HCT116 (cell line): ENCODE measurements at regions of chr3 and their contacts with region 1.

Region 1: DNA sequence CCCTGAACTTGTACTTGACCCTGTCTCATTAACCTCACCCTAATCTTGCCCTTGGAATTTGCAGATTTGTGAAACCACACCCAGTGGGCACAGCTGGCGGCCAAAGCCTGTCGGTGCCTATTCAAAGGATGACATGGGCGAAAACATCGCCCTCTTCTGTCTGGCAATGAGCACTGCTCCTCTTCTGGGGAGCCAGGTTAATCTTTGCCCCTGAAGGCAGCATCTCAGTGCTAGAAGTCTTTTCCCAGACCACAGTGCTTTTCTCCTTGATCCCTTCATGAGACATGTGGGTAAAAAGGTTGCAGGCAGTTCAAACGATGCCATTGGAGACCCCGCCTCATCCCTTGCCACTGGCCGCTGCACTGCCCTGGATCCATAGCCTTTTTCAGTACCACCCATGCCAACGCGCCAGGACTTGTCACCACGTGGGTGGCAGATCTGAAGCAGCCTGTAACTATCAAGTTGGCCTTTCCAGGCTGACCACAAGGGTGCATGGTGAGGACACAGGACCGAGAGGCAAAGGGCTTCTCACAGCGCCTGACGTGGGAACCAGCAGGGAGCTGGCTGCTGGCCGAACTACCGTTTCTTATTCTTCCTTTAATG is 6.5 kb upstream of the DNASE1L3 start:
- DNase-seq: peak; percentile 90
- ATAC-seq: peak; percentile 97
- H3K4me3 ChIP-seq: peak overlapping the region in 1 of 2 experiments; percentile 46; a peak in 3 of 4 replicates
- H3K27ac ChIP-seq: peak overlapping the region; percentile 49
- H3K4me1 ChIP-seq: peaks cover 18 to 38% of the 10 kb centered on the region in 2 experiments
- H3K27me3 ChIP-seq: no peaks in the 10 kb centered on the region
- CTCF ChIP-seq: peak; percentile 81 to 90 (median 83)
- POLR2A ChIP-seq: no peak
- RAD21 ChIP-seq: peak; percentile 55

Region 2: DNA sequence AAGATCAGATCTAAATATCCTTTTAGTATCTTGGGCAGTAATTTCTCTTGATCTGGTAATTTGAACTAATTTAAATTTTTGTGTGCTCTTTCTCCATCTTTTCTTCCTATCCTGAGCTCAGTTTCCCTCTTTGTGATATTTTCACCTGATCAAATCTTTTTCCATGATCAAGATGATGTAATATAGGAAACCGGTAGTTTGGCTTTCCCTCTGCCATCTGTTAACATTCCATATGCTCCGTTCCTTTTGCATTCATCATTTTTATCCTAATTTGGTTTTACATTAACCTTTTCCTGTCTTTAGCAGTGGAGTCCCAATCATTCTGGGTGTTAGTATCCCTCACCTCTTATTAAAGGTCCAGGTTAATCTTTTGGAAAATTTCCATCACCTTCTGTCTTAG is 14.4 kb after region 1 on chr3:
- CTCF ChIA-PET with region 1: interaction called, 28 read pairs
- POLR2A ChIA-PET with region 1: no interaction called
- RAD21 ChIA-PET with region 1: no interaction called
- intact Hi-C with region 1: no loop called
- DNase-seq: no peak
- ATAC-seq: no peak
- H3K4me3 ChIP-seq: no peak overlapping the region
- H3K27ac ChIP-seq: no peak overlapping the region
- H3K4me1 ChIP-seq: peaks cover 3 to 7% of the 10 kb centered on the region in 2 experiments
- H3K27me3 ChIP-seq: 0 out of 2 replicates have a peak, but pooled peaks cover 7% of the 10 kb centered on the region
- CTCF ChIP-seq: no peak
- POLR2A ChIP-seq: no peak
- RAD21 ChIP-seq: no peak

Region 3: GRCh38 chr3:58299839-58300516 is 82.7 kb after region 1 on chr3:
- CTCF ChIA-PET with region 1: interaction called, 14 read pairs
- POLR2A ChIA-PET with region 1: no interaction called
- RAD21 ChIA-PET with region 1: interaction called in 1 of 2 experiments, 3 read pairs
- intact Hi-C with region 1: no loop called
- DNase-seq: no peak
- ATAC-seq: peak; percentile 79
- H3K4me3 ChIP-seq: no peak overlapping the region
- H3K27ac ChIP-seq: no peak overlapping the region
- H3K4me1 ChIP-seq: no peaks in the 10 kb centered on the region
- H3K27me3 ChIP-seq: no peaks in the 10 kb centered on the region
- CTCF ChIP-seq: peak; percentile 52 to 93 (median 64)
- POLR2A ChIP-seq: no peak
- RAD21 ChIP-seq: peak; percentile 93

Region 4: DNA sequence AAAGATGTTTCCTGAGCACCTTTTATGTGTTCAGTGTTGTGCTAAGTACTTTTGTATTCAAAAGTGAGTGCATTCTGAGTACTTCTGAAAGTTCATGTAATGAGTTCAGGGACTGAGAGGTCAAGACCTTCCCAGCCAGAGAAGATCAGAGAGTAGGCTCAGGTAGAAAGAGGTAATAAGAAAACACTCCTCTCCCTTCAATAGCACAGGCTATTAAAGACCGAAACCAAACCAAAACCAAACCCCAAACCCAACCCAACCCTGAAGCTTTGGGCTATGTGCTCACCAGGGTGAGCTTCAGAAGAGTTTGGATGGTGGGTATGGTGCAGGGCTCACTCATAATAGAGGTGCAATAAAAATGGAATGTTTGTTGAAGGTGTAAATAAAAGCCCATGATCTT is 526.0 kb after region 1 on chr3:
- CTCF ChIA-PET with region 1: no interaction called
- POLR2A ChIA-PET with region 1: no interaction called
- RAD21 ChIA-PET with region 1: no interaction called
- intact Hi-C with region 1: no loop called
- DNase-seq: no peak
- ATAC-seq: no peak
- H3K4me3 ChIP-seq: no peak overlapping the region
- H3K27ac ChIP-seq: no peak overlapping the region
- H3K4me1 ChIP-seq: no peaks in the 10 kb centered on the region
- H3K27me3 ChIP-seq: 0 out of 2 replicates have a peak, but pooled peaks cover 10% of the 10 kb centered on the region
- CTCF ChIP-seq: no peak
- POLR2A ChIP-seq: no peak
- RAD21 ChIP-seq: no peak